PC-3 (cell line): ENCODE measurements at regions of chr10 and their contacts with region 1.

Region 1: DNA sequence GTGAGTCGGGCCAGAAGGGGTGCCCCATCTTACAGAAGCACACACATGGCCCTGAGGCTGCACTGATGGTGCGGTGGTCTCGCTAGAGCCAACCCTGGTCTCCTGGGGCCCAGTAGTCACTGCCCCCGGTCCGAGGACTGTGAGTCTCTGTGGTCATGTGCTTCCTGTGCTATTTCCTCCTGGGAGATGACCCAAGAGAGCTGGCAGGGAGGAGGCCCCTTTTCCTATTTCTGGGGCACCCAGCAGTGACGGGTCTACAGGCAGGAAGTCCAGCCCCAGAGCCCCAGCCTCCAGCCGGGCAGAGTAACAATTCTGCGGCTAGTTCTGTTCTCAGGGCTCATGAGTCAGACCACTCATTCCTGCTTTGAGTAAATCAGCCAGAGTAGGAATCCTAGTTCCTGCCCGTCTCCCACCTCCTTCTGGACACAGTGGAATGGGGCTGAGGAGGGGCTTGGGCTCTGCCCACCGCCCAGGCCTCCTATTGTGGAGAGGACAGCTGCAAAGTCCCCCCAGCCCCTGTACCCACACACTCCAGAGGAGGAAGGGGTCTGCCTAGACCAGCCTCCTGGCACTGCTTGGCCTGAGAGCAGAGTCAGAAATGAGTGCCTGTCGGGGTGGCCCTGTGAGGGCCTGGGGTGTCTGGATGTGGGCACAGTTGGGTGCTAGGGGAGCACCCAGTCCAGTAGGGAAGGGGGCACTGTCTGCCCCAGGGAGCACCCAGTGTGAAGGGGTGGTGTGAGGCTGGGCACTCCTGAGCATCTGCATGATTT is 80.5 kb upstream of the PPIF start:
- DNase-seq: peak; percentile 88
- ATAC-seq: peak; percentile 61
- H3K4me3 ChIP-seq: no peak overlapping the region
- H3K27ac ChIP-seq: peak overlapping the region; percentile 78
- H3K4me1 ChIP-seq: peaks cover 56% of the 10 kb centered on the region
- H3K27me3 ChIP-seq: no peaks in the 10 kb centered on the region
- CTCF ChIP-seq: no peak

Region 2: GRCh38 chr10:79242620-79243152 is 24.0 kb before region 1 on chr10:
- CTCF ChIA-PET with region 1: interaction called, 3 read pairs
- POLR2A ChIA-PET with region 1: interaction called, 3 read pairs
- intact Hi-C with region 1: loop called (anchors 2 kb)
- DNase-seq: peak; percentile 99
- ATAC-seq: peak; percentile 83
- H3K4me3 ChIP-seq: peak overlapping the region; percentile 70
- H3K27ac ChIP-seq: no peak overlapping the region; the same call in 1 of the 2 replicates
- H3K4me1 ChIP-seq: peaks cover 21% of the 10 kb centered on the region
- H3K27me3 ChIP-seq: no peaks in the 10 kb centered on the region
- CTCF ChIP-seq: no peak

Region 3: GRCh38 chr10:79286318-79286951 is 19.7 kb after region 1 on chr10:
- CTCF ChIA-PET with region 1: no interaction called
- POLR2A ChIA-PET with region 1: no interaction called
- intact Hi-C with region 1: no loop called
- DNase-seq: no peak
- ATAC-seq: no peak
- H3K4me3 ChIP-seq: no peak overlapping the region
- H3K27ac ChIP-seq: no peak overlapping the region
- H3K4me1 ChIP-seq: peaks cover 6% of the 10 kb centered on the region; the same call in 1 of the 2 replicates
- H3K27me3 ChIP-seq: no peaks in the 10 kb centered on the region
- CTCF ChIP-seq: no peak

Region 4: GRCh38 chr10:80207768-80208385 is 941.1 kb after region 1 on chr10:
- CTCF ChIA-PET with region 1: no interaction called
- POLR2A ChIA-PET with region 1: no interaction called
- intact Hi-C with region 1: no loop called
- DNase-seq: peak; percentile 96
- ATAC-seq: peak; percentile 3
- H3K4me3 ChIP-seq: peak overlapping the region; percentile 69
- H3K27ac ChIP-seq: peak overlapping the region; percentile 80
- H3K4me1 ChIP-seq: peaks cover 74% of the 10 kb centered on the region
- H3K27me3 ChIP-seq: no peaks in the 10 kb centered on the region
- CTCF ChIP-seq: no peak